ENCODE measurements at regions of chr11 and their contacts with region 1.

Region 1: DNA sequence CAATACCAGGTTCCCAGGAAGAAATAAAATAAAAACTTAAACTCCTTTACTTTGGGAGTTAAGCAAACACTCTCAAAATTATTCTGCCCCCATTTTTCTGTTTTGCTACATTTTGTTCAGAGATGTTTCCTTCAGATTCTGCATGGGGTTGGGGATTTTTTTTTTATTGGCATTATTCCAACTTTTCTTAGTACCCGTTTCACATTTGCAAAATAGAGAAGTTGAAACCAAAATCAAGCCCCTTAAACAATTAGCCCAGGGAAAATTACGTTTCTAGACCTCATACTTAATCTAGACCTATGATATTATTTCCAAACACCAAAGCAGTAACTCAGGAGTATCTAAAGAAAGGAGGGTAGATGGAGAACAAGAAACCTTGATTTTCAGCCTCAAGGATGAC is 20.6 kb upstream of the MS4A7 start:
- DNase-seq: no peak
- H3K4me3 ChIP-seq: no peak overlapping the region
- H3K27ac ChIP-seq: no peak overlapping the region
- H3K4me1 ChIP-seq: no peaks in the 10 kb centered on the region
- H3K27me3 ChIP-seq: no peaks in the 10 kb centered on the region
- CTCF ChIP-seq: no peak

Region 2: DNA sequence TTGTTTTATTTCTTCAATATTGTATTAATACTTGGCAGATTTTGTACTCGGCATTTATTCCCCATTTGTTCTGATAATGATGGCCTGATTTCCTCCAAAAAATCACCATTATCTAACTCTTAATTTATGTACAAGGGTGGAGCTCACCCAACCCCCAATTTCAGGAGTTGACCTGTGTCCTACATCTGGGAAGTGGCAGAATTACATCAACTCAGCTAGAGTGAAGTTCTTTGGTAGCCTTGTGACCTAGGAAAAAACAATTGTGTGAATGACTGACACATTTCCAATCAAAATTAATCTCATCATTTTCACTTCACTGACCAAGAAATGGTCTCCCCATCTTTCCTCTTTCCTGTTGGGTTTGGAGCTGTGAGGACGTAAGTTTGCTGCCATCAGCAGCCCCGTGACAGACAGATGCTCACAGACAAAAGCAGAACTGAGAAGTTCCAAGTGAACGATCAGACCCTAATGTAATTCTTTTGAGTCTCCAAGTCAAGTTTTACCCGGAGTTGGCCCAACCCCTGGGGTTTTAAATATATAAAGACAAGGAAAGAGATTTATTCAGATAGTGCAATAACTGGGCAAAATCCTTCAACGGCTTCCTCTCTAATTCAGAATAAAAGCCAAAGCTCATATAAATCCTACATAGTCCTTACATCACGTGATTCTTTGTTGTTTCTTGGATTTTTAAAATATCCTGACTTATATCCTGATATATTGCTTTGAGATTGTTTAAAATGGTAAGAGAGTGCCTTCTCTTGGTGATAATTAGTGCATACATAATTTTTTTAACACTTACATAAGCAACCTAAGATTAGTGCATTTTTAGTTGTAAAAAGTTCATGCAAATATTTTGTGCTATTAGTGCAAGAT is 47.1 kb before region 1 on chr11:
- intact Hi-C with region 1: no loop called
- DNase-seq: peak in 1 of 2 donors; percentile 21
- H3K4me3 ChIP-seq: no peak overlapping the region
- H3K27ac ChIP-seq: no peak overlapping the region
- H3K4me1 ChIP-seq: no peaks in the 10 kb centered on the region
- H3K27me3 ChIP-seq: no peaks in the 10 kb centered on the region
- CTCF ChIP-seq: no peak

Region 3: GRCh38 chr11:60377401-60378136 is 19.8 kb after region 1 on chr11:
- intact Hi-C with region 1: loop called (anchors 2 kb)
- DNase-seq: peak; percentile 67 to 81
- H3K4me3 ChIP-seq: no peak overlapping the region
- H3K27ac ChIP-seq: peak overlapping the region; percentile 40 to 48
- H3K4me1 ChIP-seq: no peaks in the 10 kb centered on the region
- H3K27me3 ChIP-seq: no peaks in the 10 kb centered on the region
- CTCF ChIP-seq: no peak

Region 4: GRCh38 chr11:60786811-60787567 is 429.2 kb after region 1 on chr11:
- intact Hi-C with region 1: no loop called
- DNase-seq: peak in 1 of 2 donors; percentile 72
- H3K4me3 ChIP-seq: no peak overlapping the region
- H3K27ac ChIP-seq: no peak overlapping the region
- H3K4me1 ChIP-seq: no peaks in the 10 kb centered on the region
- H3K27me3 ChIP-seq: no peaks in the 10 kb centered on the region
- CTCF ChIP-seq: no peak

Measured in ascending aorta (tissue), 2 donors.